ENCODE measurements at regions of chr7 and their contacts with region 1.

Region 1: GRCh38 chr7:108569381-108570145 is at the starts of genes DNAJB9 and THAP5:
- DNase-seq: peak; percentile 99
- H3K4me3 Mint-ChIP-seq: peak within 1 kb of the TSS; percentile 88
- H3K27ac Mint-ChIP-seq: peak within 1 kb of the TSS; percentile 98
- H3K4me1 Mint-ChIP-seq: peaks cover 53% of the 10 kb centered on the region
- H3K27me3 Mint-ChIP-seq: no peaks in the 10 kb centered on the region
- total RNA-seq, gene DNAJB9: 22.7 to 23.2 TPM
- total RNA-seq, gene THAP5: 28.7 to 28.8 TPM

Region 2: GRCh38 chr7:108525985-108526767 is 43.4 kb before region 1 on chr7 and contains the start of gene PNPLA8:
- CTCF ChIA-PET with region 1: interaction called, 7 read pairs
- POLR2A ChIA-PET with region 1: interaction called, 119 read pairs
- DNase-seq: peak; percentile 100
- H3K4me3 Mint-ChIP-seq: peak within 1 kb of the TSS; percentile 93
- H3K27ac Mint-ChIP-seq: peak within 1 kb of the TSS; percentile 97
- H3K4me1 Mint-ChIP-seq: peaks cover 43% of the 10 kb centered on the region
- H3K27me3 Mint-ChIP-seq: no peaks in the 10 kb centered on the region
- total RNA-seq, gene PNPLA8: 21.9 to 23.2 TPM

Measured in activated CD4-positive, alpha-beta memory T cell treated with anti-CD3 and anti-CD28 coated beads, Interleukin-2, amount 10 ng/mL, durations not matched to agents 7 days and 5 days (primary cell).